ENCODE measurements at regions of chr20 and their contacts with region 1.

Region 1: DNA sequence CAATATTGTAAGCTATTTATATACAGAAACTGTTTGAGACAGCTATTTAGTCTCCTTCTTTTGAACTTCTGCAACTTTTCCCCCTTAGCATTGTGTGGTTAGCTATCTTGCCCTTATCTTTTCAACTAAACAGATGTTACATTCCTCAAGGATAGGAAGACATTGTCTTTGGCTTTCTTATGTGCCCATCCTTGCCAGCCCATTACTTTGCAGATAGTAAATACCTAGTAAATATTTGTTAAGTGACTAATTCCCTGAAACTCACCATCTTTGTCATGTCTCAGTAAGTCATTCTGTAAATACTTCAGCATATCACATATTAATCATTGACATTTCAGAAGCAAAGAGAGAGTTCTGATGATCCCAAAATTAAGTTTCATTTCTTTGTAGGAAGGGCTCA is 69.1 kb upstream of the FLRT3 start:
- DNase-seq: peak; percentile 94
- ATAC-seq: peak; percentile 92
- H3K4me3 ChIP-seq: peak overlapping the region; percentile 50
- H3K27ac ChIP-seq: peak overlapping the region; percentile 98
- H3K4me1 ChIP-seq: peaks cover 33% of the 10 kb centered on the region
- H3K27me3 ChIP-seq: no peaks in the 10 kb centered on the region
- CTCF ChIP-seq: no peak

Region 2: GRCh38 chr20:14477125-14477524 is 70.6 kb after region 1 on chr20:
- CTCF ChIA-PET with region 1: no interaction called
- POLR2A ChIA-PET with region 1: no interaction called
- intact Hi-C with region 1: no loop called
- DNase-seq: no peak
- ATAC-seq: no peak
- H3K4me3 ChIP-seq: no peak overlapping the region
- H3K27ac ChIP-seq: no peak overlapping the region
- H3K4me1 ChIP-seq: peaks cover 7% of the 10 kb centered on the region
- H3K27me3 ChIP-seq: no peaks in the 10 kb centered on the region
- CTCF ChIP-seq: no peak

Region 3: GRCh38 chr20:14488756-14489479 is 82.4 kb after region 1 on chr20:
- CTCF ChIA-PET with region 1: no interaction called
- POLR2A ChIA-PET with region 1: no interaction called
- intact Hi-C with region 1: loop called (anchors 1 kb)
- DNase-seq: peak; percentile 53
- ATAC-seq: peak; percentile 73
- H3K4me3 ChIP-seq: no peak overlapping the region
- H3K27ac ChIP-seq: peak overlapping the region; percentile 14
- H3K4me1 ChIP-seq: peaks cover 12% of the 10 kb centered on the region
- H3K27me3 ChIP-seq: no peaks in the 10 kb centered on the region
- CTCF ChIP-seq: no peak

Region 4: DNA sequence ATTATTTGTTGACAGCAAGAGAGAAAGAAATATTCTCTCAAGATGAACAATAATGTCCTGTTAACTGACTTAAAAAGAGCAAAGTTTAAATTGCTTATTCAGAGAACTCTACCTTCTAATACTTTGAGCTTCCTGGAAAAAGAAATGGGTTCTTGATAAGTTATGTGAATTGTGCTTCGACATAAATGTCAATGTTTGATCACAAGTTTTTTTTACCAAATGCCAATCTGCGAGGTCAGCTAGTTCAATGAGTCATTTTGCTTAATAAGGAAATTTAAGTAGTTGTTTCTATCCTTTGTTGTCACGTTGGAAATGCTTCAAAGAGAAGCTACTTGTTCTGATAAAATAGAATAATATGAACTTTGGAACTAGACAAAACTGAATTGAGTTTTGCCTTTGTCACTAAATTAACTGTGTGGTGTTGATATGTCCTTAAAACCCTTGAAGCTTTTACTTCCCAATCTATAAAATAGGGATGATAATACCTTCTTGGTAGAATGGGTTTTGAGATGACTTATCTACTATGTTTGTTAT is 573.0 kb after region 1 on chr20:
- CTCF ChIA-PET with region 1: no interaction called
- POLR2A ChIA-PET with region 1: no interaction called
- intact Hi-C with region 1: loop called (anchors 5 kb)
- DNase-seq: peak; percentile 54
- ATAC-seq: peak; percentile 42
- H3K4me3 ChIP-seq: no peak overlapping the region
- H3K27ac ChIP-seq: no peak overlapping the region
- H3K4me1 ChIP-seq: peaks cover 8% of the 10 kb centered on the region
- H3K27me3 ChIP-seq: no peaks in the 10 kb centered on the region
- CTCF ChIP-seq: no peak

Measured in PC-3 (cell line).